ENCODE measurements at regions of chr11 and their contacts with region 1.

Region 1: DNA sequence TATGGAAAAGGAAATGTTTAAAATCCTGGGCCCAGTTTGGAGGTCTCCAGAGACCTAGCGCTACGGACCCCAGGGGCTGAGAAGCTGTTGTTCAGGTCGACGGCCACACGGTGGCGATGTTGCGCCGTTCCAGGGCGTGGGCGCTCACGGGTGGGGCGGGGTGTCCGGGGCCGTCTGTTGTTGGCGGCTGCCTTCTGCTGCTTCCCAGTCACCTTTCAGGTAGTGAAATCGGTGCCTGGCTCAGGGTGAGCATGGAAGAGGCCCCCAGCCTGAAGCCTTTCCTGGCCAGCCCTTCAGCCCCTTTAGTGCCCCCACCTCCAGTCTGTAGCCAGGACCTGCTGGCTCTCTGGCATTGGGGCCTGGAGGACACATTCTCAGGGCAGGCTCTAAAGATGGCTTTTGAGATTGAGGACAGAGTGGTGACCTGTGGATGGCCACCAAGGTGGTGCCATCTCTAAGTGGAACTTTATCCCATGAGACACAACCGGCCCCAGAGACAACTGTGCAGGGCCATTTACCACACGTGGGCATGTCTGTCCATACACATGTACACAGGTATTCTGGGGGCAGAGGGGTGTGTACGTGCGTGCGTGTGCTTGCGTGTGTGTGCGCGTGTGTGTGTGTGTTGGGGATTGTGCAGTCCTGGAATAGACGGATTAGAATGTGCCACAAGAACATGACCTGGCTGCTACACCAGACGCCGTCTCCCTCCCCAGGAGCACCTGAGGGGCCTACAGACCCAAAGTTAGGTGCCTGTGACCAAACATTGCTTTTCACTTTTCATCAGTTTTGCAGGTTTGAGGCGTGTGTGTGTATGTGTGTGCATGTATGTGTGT is 53.8 kb downstream of the ST14 start:
- DNase-seq: peak; percentile 56
- H3K4me3 Mint-ChIP-seq: no peak overlapping the region
- H3K27ac Mint-ChIP-seq: no peak overlapping the region
- H3K4me1 Mint-ChIP-seq: no peaks in the 10 kb centered on the region
- H3K27me3 Mint-ChIP-seq: no peaks in the 10 kb centered on the region

Region 2: GRCh38 chr11:130370845-130371590 is 157.7 kb after region 1 on chr11:
- intact Hi-C with region 1: loop called (anchors 1 kb)
- DNase-seq: no peak
- H3K4me3 Mint-ChIP-seq: no peak overlapping the region
- H3K27ac Mint-ChIP-seq: no peak overlapping the region
- H3K4me1 Mint-ChIP-seq: no peaks in the 10 kb centered on the region
- H3K27me3 Mint-ChIP-seq: peaks cover 6% of the 10 kb centered on the region

Region 3: GRCh38 chr11:130457623-130458409 is 244.5 kb after region 1 on chr11:
- intact Hi-C with region 1: no loop called
- DNase-seq: no peak
- H3K4me3 Mint-ChIP-seq: no peak overlapping the region
- H3K27ac Mint-ChIP-seq: no peak overlapping the region
- H3K4me1 Mint-ChIP-seq: no peaks in the 10 kb centered on the region
- H3K27me3 Mint-ChIP-seq: peaks cover 18% of the 10 kb centered on the region

Region 4: DNA sequence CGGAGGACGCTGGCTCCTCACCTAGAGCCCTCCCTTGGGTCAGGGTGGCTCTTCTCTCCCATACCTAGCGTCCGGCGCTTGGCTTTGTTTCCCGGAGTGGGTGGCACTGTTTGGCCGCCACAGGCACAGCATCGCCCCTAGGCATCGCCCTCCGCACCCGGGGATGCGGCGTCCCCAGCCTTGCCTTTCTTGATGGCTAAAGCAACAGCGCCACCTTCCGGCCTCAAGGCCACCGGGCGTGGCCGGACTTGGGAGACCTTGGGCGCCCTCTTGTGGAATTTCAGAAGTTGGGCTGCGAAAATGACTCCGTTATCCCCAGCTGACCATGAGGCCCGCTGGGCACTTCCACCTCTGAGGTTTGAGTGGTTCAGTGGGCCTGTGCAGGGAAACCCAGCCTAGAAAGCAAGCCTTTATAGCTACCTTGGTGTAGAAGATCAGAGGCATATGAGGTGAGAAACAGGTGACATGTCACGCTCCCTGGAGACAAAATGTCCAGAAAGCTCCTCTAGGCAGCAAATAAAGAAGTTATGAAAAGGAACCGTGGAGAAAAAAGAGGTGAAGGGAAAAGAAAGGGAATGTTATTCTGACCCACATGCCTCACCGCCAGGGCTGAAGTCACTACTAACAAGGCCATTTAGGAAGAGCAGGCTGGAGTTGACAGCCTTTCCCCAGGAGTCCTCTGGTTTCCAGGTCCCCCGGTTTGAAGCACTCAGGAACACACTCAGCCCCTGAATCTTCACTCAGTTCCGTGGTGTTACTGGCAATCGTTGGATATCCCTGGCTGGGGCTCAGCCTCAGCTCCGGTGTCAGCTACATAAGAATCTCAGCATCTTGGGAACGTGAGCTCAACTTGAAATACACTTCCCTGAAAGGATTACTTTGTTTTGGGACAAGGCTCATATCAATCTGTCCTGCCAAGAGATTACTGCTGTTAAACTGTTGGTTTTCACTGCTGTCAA is 648.8 kb after region 1 on chr11:
- intact Hi-C with region 1: loop called (anchors 1 kb)
- DNase-seq: peak; percentile 79
- H3K4me3 Mint-ChIP-seq: no peak overlapping the region
- H3K27ac Mint-ChIP-seq: no peak overlapping the region
- H3K4me1 Mint-ChIP-seq: no peaks in the 10 kb centered on the region
- H3K27me3 Mint-ChIP-seq: peaks cover under 1% of the 10 kb centered on the region